Caco-2 (cell line): ENCODE measurements at regions of chr2 and their contacts with region 1.

Region 1: DNA sequence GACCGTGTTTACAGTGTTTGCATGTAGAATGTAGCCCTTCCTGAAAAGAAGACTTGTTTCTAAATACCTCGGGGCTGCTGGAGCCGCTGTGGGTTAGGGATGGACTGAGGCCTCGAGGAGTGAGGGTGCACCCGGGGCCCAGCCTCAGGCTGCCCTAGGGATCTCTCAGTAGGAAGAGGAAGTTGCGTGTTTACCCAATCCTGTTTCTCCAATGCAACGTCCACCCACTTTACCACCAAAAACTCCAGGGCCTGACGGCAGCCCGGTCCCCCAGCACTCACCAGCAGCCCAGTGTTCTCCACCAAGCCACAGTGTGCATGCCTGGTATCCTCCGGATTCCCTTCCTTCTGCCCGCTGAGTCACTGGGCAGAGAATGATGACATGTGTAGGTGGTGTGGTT is 255.8 kb downstream of the GLI2 start:
- DNase-seq: no peak
- H3K4me3 ChIP-seq: no peak overlapping the region
- H3K4me3 Mint-ChIP-seq: no peak overlapping the region
- H3K27ac Mint-ChIP-seq: no peak overlapping the region
- H3K4me1 ChIP-seq: no peaks in the 10 kb centered on the region
- H3K4me1 Mint-ChIP-seq: no peaks in the 10 kb centered on the region
- H3K27me3 ChIP-seq: no peaks in the 10 kb centered on the region
- H3K27me3 Mint-ChIP-seq: no peaks in the 10 kb centered on the region
- CTCF ChIP-seq: no peak

Region 2: DNA sequence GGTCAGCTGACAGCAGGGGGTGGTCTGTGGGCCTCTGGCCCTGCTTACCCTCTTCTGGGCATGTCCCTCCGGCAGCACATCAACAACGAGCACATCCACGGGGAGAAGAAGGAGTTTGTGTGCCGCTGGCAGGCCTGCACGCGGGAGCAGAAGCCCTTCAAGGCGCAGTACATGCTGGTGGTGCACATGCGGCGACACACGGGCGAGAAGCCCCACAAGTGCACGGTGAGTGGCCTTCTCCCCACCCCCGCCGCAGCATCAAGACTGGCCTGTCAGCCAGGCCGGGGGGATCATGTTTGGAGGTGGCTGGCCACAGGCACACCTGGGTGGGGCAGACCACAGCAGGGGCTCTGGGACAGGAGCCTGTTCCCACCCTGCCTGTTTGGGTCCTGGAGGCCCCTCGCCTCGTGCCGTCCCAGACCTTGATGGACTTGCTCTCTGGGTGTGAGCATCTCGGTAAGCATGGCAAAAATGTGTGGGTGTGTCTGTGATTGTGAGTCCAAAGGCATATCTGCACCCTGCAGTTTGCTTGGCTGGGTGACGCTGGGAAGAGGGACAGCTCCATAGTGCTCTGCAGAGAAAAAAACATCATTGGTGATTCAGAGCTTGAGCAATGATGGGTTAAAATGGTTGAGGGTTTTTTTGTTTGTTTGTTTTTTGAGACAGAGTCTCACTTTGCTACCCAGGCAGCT is 12.9 kb before region 1 on chr2:
- CTCF ChIA-PET with region 1: interaction called, 13 read pairs
- POLR2A ChIA-PET with region 1: no interaction called
- intact Hi-C with region 1: no loop called
- DNase-seq: peak; percentile 50 to 73
- H3K4me3 ChIP-seq: no peak overlapping the region
- H3K4me3 Mint-ChIP-seq: no peak overlapping the region
- H3K27ac Mint-ChIP-seq: no peak overlapping the region
- H3K4me1 ChIP-seq: peaks cover 35% of the 10 kb centered on the region
- H3K4me1 Mint-ChIP-seq: peaks cover 20% of the 10 kb centered on the region
- H3K27me3 ChIP-seq: no peaks in the 10 kb centered on the region
- H3K27me3 Mint-ChIP-seq: no peaks in the 10 kb centered on the region
- CTCF ChIP-seq: no peak

Region 3: DNA sequence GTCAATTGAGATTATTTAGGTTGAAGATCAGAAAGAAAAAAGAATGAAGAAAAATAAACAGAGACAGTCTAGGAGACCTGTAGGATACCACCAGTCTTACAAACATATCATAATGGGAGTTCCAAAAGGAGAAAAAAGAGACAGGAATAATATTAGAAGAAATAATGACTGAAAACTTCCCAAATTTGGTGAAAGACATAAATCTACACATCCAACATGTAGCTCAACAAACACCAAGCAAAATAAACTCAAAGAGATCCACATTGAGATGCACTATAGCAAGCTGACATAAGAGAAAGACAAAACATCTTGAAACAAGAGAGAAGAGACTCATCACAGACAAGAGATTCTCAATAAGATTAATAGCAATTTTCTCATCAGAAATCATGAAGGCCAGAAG is 19.6 kb after region 1 on chr2:
- CTCF ChIA-PET with region 1: no interaction called
- POLR2A ChIA-PET with region 1: no interaction called
- intact Hi-C with region 1: loop called (anchors 1 kb)
- DNase-seq: no peak
- H3K4me3 ChIP-seq: no peak overlapping the region
- H3K4me3 Mint-ChIP-seq: no peak overlapping the region
- H3K27ac Mint-ChIP-seq: no peak overlapping the region
- H3K4me1 ChIP-seq: no peaks in the 10 kb centered on the region; the same call in 1 of the 2 replicates
- H3K4me1 Mint-ChIP-seq: peaks cover 10% of the 10 kb centered on the region
- H3K27me3 ChIP-seq: no peaks in the 10 kb centered on the region
- H3K27me3 Mint-ChIP-seq: no peaks in the 10 kb centered on the region
- CTCF ChIP-seq: no peak